ENCODE measurements at regions of chr11 and their contacts with region 1.

Region 1: GRCh38 chr11:76512851-76513653 is 68.2 kb downstream of the EMSY start:
- DNase-seq: peak; percentile 29
- H3K4me3 ChIP-seq: no peak overlapping the region
- CTCF ChIP-seq: peak; percentile 33

Region 2: GRCh38 chr11:76235233-76236091 is 277.6 kb before region 1 on chr11:
- in situ Hi-C with region 1: loop called (anchors 25 kb)
- DNase-seq: peak; percentile 86
- H3K4me3 ChIP-seq: peak overlapping the region; percentile 81
- CTCF ChIP-seq: no peak

Region 3: DNA sequence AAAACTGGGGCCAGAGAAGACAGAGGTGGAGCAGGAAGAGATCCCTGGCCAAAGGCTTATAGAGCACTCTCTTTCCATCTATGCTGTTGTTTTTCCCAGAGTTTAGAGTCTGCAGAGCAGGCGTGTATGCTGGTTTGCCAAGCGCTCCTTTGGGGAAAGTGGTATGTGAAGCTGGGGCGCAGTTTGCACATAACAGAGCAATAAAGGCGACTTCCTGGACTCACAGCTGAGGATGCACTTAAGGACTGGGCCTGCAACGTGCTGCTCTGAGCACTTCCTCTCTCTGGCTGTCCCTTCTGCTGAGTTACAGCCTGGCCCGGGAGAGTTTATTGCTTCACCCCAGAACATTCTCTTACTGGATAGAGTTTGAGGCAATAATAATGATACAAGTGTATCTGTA is 173.8 kb before region 1 on chr11:
- in situ Hi-C with region 1: loop called (anchors 25 kb)
- DNase-seq: no peak
- H3K4me3 ChIP-seq: no peak overlapping the region
- CTCF ChIP-seq: no peak

Region 4: DNA sequence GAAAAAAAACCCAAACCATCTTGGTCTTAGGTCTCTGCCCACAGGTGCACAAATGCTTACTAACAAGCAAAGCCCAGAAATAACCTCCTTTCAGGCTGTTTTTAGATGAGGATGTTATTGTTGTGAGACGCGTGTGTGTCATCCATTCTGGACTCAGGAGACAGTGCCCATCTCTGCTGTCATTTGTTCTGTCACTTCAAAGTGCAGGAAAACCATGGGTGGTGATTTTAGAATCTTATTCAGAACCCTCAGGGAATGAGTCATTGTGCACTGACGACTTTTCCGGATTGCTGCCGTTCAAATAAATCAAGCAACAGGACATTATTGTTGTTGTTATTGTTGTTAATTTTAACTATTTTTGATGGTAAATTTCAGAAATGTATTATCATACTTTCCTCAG is 47.2 kb after region 1 on chr11:
- in situ Hi-C with region 1: no loop called
- DNase-seq: no peak
- H3K4me3 ChIP-seq: no peak overlapping the region
- CTCF ChIP-seq: no peak

Region 5: DNA sequence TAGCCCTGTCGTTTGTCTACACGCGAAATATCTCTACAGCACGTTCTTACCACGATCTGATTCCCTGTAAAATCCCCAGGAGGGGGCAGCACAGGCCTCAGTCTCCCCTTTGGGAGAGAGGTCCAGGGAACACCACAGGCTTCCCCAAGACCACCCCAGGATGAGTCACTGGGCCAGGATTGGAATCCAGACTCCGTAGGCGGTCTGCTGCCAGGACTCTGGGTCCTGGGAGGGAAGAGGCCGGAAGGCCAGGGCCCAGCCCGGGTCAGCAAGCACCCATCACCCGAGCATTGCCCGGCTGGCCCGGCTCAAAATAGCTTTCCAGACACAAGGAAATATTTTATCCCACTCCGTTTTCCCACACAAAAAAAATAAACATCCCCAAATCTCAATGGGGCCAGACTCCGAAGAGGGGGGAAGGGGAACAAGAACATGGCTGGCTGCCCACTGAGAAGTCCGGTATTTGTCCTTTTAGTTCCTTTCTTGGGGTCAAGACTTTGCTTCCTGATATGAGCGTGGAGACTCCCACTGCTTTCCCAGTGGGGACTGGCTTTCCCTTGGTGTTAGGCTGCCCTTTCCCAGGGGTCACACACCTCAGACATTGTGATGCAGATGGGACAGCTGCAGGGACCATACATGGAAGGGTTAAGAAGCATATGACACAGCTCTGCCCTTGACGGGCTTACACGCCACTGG is 66.2 kb after region 1 on chr11:
- in situ Hi-C with region 1: no loop called
- DNase-seq: no peak
- H3K4me3 ChIP-seq: no peak overlapping the region
- CTCF ChIP-seq: no peak

Region 6: GRCh38 chr11:77506857-77507256 is 993.8 kb after region 1 on chr11:
- in situ Hi-C with region 1: no loop called
- DNase-seq: no peak
- H3K4me3 ChIP-seq: no peak overlapping the region
- CTCF ChIP-seq: no peak

Measured in astrocyte of the cerebellum (primary cell).